ENCODE measurements at regions of chr11 and their contacts with region 1.

Region 1: GRCh38 chr11:69554894-69555293 is 73.4 kb downstream of the LINC01488 start:
- DNase-seq: no peak
- ATAC-seq: no peak
- H3K4me3 ChIP-seq: no peak overlapping the region
- H3K27ac ChIP-seq: no peak overlapping the region
- H3K4me1 ChIP-seq: no peaks in the 10 kb centered on the region
- H3K27me3 ChIP-seq: no peaks in the 10 kb centered on the region
- CTCF ChIP-seq: no peak

Region 2: GRCh38 chr11:69259096-69259495 is 295.8 kb before region 1 on chr11:
- CTCF ChIA-PET with region 1: interaction called, 14 read pairs
- POLR2A ChIA-PET with region 1: no interaction called
- intact Hi-C with region 1: no loop called
- DNase-seq: peak; percentile 72
- ATAC-seq: peak; percentile 58
- H3K4me3 ChIP-seq: no peak overlapping the region
- H3K27ac ChIP-seq: no peak overlapping the region
- H3K4me1 ChIP-seq: no peaks in the 10 kb centered on the region
- H3K27me3 ChIP-seq: no peaks in the 10 kb centered on the region
- CTCF ChIP-seq: no peak

Region 3: DNA sequence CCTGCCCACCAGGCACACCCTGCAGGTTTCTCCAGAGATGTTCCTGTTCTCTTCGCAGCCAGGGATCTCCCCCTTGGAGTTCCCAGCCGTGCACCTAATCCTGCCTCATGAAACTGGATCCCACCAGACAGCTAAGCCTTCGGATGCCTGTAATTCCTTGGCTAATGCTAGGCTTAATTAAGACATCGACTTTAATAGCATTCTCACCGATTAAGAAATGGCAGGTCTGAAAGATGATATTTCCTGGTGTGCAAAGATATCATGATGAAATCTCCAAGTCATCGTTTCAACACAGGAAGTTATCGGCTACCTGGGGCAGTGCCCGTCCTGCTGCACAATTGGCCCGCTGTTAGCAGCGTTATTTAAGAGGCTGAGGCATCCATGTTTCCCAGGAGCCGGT is 44.6 kb after region 1 on chr11:
- CTCF ChIA-PET with region 1: interaction called, 13 read pairs
- POLR2A ChIA-PET with region 1: no interaction called
- intact Hi-C with region 1: no loop called
- DNase-seq: no peak
- ATAC-seq: no peak
- H3K4me3 ChIP-seq: no peak overlapping the region
- H3K27ac ChIP-seq: no peak overlapping the region
- H3K4me1 ChIP-seq: no peaks in the 10 kb centered on the region
- H3K27me3 ChIP-seq: no peaks in the 10 kb centered on the region
- CTCF ChIP-seq: no peak

Measured in PC-3 (cell line).